ENCODE measurements at regions of chr4 and their contacts with region 1.

Region 1: GRCh38 chr4:129839687-129840086 is 743.7 kb downstream of the C4orf33 start:
- DNase-seq: no peak
- H3K4me3 ChIP-seq: no peak overlapping the region
- H3K27ac ChIP-seq: no peak overlapping the region
- H3K4me1 ChIP-seq: peaks cover 0 to 3% (median 0%) of the 10 kb centered on the region in 4 donors
- H3K27me3 ChIP-seq: no peaks in the 10 kb centered on the region
- CTCF ChIP-seq: no peak
- EP300 ChIP-seq: no peak
- POLR2A ChIP-seq: no peak

Region 2: DNA sequence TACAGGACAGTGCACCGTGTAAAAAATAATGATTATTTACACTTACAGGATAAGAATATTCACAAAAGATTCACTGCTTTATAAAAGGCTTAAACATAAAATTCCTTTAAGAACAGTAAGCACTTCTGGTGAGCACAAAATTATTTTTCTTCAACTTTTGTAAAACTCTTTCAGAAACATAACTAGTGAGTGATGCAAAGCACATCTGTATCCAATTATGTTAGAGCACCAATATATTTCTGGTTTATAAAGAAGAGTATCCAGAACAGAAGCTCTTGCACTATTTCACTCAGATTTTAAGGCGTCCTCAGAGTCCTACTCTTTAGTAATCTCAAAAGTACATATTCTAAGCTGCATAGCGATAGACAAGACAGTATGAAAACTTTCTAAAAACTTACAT is 467.8 kb before region 1 on chr4:
- intact Hi-C with region 1: loop called (anchors 5 kb)
- DNase-seq: no peak
- H3K4me3 ChIP-seq: no peak overlapping the region
- H3K27ac ChIP-seq: no peak overlapping the region
- H3K4me1 ChIP-seq: peaks cover 0 to 28% (median 17%) of the 10 kb centered on the region in 4 donors
- H3K27me3 ChIP-seq: no peaks in the 10 kb centered on the region
- CTCF ChIP-seq: no peak
- EP300 ChIP-seq: no peak
- POLR2A ChIP-seq: no peak

Region 3: DNA sequence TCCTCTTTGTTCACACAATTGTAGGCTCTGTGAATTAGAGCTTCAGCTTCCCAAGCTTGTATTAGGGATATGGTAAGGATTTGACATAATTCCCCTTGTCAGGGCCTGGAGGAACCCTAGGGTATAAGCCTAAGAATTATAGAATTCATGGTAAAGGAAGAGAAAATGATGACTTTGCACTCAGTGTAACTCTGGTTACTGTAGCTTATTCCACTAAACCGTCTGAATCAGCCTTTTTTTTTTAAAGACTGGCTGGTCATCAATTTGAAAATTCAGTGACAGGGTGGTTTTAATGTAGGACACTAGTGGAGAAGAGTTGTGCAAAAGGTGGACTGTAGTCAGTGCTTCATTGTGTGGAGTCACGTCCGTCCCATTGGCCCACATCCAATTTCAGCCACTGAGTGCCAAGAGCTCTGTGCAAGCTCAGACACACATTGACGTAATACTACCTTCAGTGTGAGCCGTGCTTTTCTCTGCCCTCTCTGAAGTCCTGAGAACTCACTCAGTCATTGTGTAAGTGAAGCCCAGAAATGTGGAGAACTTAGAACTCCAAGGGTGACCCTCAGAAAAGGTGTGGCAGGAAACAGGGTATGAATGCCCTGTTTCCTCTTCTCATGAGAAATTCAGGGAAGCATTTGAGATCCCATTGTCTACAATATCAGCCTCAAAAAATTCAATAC is 293.9 kb before region 1 on chr4:
- intact Hi-C with region 1: no loop called
- DNase-seq: peak; percentile 91
- H3K4me3 ChIP-seq: no peak overlapping the region
- H3K27ac ChIP-seq: peak overlapping the region in 2 of 4 donors; percentile 53 to 55
- H3K4me1 ChIP-seq: peaks cover 0 to 27% (median 10%) of the 10 kb centered on the region in 4 donors
- H3K27me3 ChIP-seq: no peaks in the 10 kb centered on the region
- CTCF ChIP-seq: no peak
- EP300 ChIP-seq: peak in 1 of 4 donors; percentile 45
- POLR2A ChIP-seq: no peak